Heart left ventricle (tissue), 16 donors: ENCODE measurements at regions of chr3 and their contacts with region 1.

Region 1: GRCh38 chr3:632572-633170 is 436.1 kb downstream of the CHL1 start:
- DNase-seq: peak in 3 of 5 donors; percentile 7 to 22 (median 17)
- ATAC-seq: no peak
- H3K4me3 ChIP-seq: no peak overlapping the region
- H3K27ac ChIP-seq: no peak overlapping the region
- H3K4me1 ChIP-seq: no peaks in the 10 kb centered on the region
- H3K27me3 ChIP-seq: no peaks in the 10 kb centered on the region
- CTCF ChIP-seq: peak; percentile 13 to 66 (median 51)
- POLR2A ChIP-seq: no peak

Region 2: DNA sequence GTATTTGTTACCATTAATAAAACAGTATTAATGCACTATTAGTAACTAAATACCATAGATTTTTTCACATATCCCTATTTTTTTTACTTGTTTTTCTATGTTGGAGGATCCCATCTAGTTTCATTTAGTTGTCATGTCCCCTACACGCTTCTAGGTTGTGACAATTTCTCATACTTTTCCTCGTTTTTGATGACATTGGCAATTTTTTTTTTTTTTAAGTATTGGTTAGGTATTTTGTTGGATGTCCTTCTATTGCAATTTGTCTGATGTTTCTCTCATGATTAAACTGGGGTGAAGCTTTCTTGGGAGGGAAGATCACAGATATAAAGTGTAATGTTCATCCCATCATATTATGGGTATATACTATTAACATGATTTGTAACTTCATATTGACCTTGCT is 51.1 kb after region 1 on chr3:
- intact Hi-C with region 1: loop called in 1 of 10 experiments (anchors 2 kb)
- DNase-seq: no peak
- ATAC-seq: no peak
- H3K4me3 ChIP-seq: no peak overlapping the region
- H3K27ac ChIP-seq: no peak overlapping the region
- H3K4me1 ChIP-seq: no peaks in the 10 kb centered on the region
- H3K27me3 ChIP-seq: no peaks in the 10 kb centered on the region
- CTCF ChIP-seq: no peak
- POLR2A ChIP-seq: no peak

Region 3: DNA sequence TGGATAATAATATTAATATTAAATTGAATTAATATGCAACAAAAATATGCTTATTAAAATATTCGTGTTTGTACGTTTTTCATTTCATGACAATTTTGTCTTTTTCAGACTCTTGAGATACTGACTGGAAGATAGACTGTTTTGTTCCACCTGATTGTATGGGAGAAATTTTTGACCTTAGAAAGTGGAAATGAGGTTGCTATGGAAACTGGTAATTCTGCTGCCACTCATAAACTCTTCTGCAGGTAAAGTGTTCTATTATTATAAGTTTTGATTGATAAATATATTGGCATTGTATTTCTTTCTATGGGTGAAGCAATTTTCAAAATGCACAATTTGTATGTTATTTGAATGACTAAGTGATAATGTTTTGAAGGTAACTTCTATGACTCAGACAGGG is 515.1 kb after region 1 on chr3:
- intact Hi-C with region 1: no loop called
- DNase-seq: no peak
- ATAC-seq: no peak
- H3K4me3 ChIP-seq: no peak overlapping the region
- H3K27ac ChIP-seq: no peak overlapping the region
- H3K4me1 ChIP-seq: no peaks in the 10 kb centered on the region
- H3K27me3 ChIP-seq: no peaks in the 10 kb centered on the region
- CTCF ChIP-seq: no peak
- POLR2A ChIP-seq: no peak